ENCODE measurements at regions of chrX and their contacts with region 1.

Region 1: GRCh38 chrX:149950681-149951080 is 12.4 kb upstream of the EOLA2 start:
- DNase-seq: no peak
- H3K4me3 Mint-ChIP-seq: no peak overlapping the region
- H3K27ac Mint-ChIP-seq: no peak overlapping the region
- H3K4me1 Mint-ChIP-seq: no peaks in the 10 kb centered on the region
- H3K27me3 Mint-ChIP-seq: no peaks in the 10 kb centered on the region

Region 2: GRCh38 chrX:149871940-149872339 is 78.7 kb before region 1 on chrX:
- CTCF ChIA-PET with region 1: no interaction called
- POLR2A ChIA-PET with region 1: no interaction called
- intact Hi-C with region 1: loop called (anchors 10 kb)
- DNase-seq: peak; percentile 72
- H3K4me3 Mint-ChIP-seq: no peak overlapping the region
- H3K27ac Mint-ChIP-seq: no peak overlapping the region
- H3K4me1 Mint-ChIP-seq: peaks cover 2% of the 10 kb centered on the region
- H3K27me3 Mint-ChIP-seq: peaks cover 3% of the 10 kb centered on the region